Activated T-helper 2 cell treated with anti-CD3 and anti-CD28 coated beads, Interferon-gamma antibody, Interleukin-2, Interleukin-4, amounts not matched to agents 10 μg/mL and 5 μg/mL and 100 μg/mL, durations not matched to agents 14 hours and 24 hours and 36 hours (primary cell): ENCODE measurements at regions of chr9 and their contacts with region 1.

Region 1: GRCh38 chr9:4339357-4339756 is 39.5 kb upstream of the GLIS3 start:
- DNase-seq: peak; percentile 69
- H3K4me3 Mint-ChIP-seq: peak overlapping the region; percentile 27
- H3K27ac Mint-ChIP-seq: peak overlapping the region; percentile 51
- H3K4me1 Mint-ChIP-seq: peaks cover 10% of the 10 kb centered on the region
- H3K27me3 Mint-ChIP-seq: peaks cover 2% of the 10 kb centered on the region

Region 2: GRCh38 chr9:3968891-3969290 is 370.5 kb before region 1 on chr9:
- intact Hi-C with region 1: no loop called
- DNase-seq: no peak
- H3K4me3 Mint-ChIP-seq: no peak overlapping the region
- H3K27ac Mint-ChIP-seq: no peak overlapping the region
- H3K4me1 Mint-ChIP-seq: peaks cover 16% of the 10 kb centered on the region
- H3K27me3 Mint-ChIP-seq: no peaks in the 10 kb centered on the region

Region 3: DNA sequence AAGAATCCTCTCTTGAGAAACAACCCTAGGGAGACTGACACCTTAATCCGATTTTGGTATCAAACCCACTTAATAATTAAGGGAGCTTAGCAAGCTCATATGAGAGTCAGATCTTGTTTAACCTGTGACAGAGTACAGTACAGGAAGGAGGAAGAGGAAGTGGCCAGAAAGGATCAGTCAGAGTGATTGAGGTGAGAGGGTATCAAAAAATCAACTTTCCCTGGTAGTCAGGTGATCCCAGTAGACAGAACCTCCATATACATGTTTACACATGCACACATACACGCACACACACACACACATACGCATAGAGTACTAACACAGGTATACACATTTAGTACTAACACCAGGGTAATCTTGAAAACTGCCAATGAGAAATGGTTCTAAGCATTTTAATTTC is 96.2 kb before region 1 on chr9:
- intact Hi-C with region 1: no loop called
- DNase-seq: no peak
- H3K4me3 Mint-ChIP-seq: no peak overlapping the region
- H3K27ac Mint-ChIP-seq: no peak overlapping the region
- H3K4me1 Mint-ChIP-seq: peaks cover 13% of the 10 kb centered on the region
- H3K27me3 Mint-ChIP-seq: no peaks in the 10 kb centered on the region

Region 4: GRCh38 chr9:4297151-4297785 is 42.1 kb before region 1 on chr9:
- intact Hi-C with region 1: loop called (anchors 2 kb)
- DNase-seq: peak; percentile 22
- H3K4me3 Mint-ChIP-seq: peak overlapping the region; percentile 97
- H3K27ac Mint-ChIP-seq: peak overlapping the region; percentile 87
- H3K4me1 Mint-ChIP-seq: peaks cover 49% of the 10 kb centered on the region
- H3K27me3 Mint-ChIP-seq: peaks cover 56% of the 10 kb centered on the region

Region 5: GRCh38 chr9:4315582-4316215 is 23.7 kb before region 1 on chr9:
- intact Hi-C with region 1: loop called (anchors 1 kb)
- DNase-seq: peak; percentile 47
- H3K4me3 Mint-ChIP-seq: no peak overlapping the region
- H3K27ac Mint-ChIP-seq: no peak overlapping the region
- H3K4me1 Mint-ChIP-seq: peaks cover 2% of the 10 kb centered on the region
- H3K27me3 Mint-ChIP-seq: peaks cover 3% of the 10 kb centered on the region

Region 6: GRCh38 chr9:4375424-4376200 is 36.3 kb after region 1 on chr9:
- intact Hi-C with region 1: loop called (anchors 5 kb)
- DNase-seq: no peak
- H3K4me3 Mint-ChIP-seq: no peak overlapping the region
- H3K27ac Mint-ChIP-seq: no peak overlapping the region
- H3K4me1 Mint-ChIP-seq: no peaks in the 10 kb centered on the region
- H3K27me3 Mint-ChIP-seq: peaks cover 22% of the 10 kb centered on the region